Activated T-helper 1 cell treated with anti-CD3 and anti-CD28 coated beads, Interleukin-12 subunit alpha, Interleukin-12 subunit beta, Interleukin-2, Interleukin-4 antibody, amounts not matched to agents 30 ng/mL and 10 ng/mL and 1 ng/mL, durations not matched to agents 14 hours and 24 hours and 36 hours (primary cell): ENCODE measurements at regions of chr12 and their contacts with region 1.

Region 1: DNA sequence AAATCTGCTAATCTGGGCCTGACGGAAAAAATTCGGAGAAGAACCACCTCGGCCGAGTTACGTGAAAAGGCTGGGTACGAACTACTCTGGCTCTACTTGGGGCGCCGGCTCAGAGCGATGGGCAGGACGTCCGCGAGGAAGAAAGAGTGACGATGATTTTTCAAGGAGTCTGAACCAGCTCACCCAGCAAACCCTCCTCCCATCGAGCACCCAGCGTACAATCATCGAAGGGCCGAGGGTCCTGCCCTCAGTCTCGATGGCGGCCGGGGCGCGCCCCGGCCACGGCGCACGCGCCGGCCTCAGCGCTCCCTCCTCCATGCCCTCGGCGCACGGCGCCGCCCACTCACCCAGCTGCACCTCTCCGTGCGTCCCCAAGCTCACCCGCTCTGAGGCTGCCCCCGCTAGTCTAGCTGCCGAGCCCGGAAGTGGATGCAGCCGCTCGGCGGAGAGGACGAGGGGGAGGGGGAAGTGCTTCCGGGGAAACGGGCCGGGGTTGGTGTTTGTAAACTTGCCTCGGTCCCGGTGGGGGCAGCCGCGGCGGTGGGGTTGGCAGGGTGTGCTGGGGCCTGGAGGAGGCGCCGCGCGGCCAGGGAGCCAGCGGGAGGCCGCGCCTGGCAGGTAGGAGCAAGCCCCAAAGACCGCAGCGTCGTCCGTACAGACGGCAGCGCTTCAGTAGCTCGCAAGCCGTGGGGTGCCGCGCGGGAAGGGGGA is at the starts of genes CSAD and ZNF740:
- DNase-seq: peak; percentile 97
- H3K4me3 Mint-ChIP-seq: peak within 1 kb of the TSS; percentile 88
- H3K27ac Mint-ChIP-seq: peak within 1 kb of the TSS; percentile 99
- H3K4me1 Mint-ChIP-seq: peaks cover 52% of the 10 kb centered on the region
- H3K27me3 Mint-ChIP-seq: no peaks in the 10 kb centered on the region
- total RNA-seq, gene CSAD: 21.7 and 22.6 TPM in 2 replicates
- total RNA-seq, gene ZNF740: 48.1 and 52.8 TPM in 2 replicates

Region 2: GRCh38 chr12:52486166-52487105 is 693.9 kb before region 1 on chr12:
- intact Hi-C with region 1: no loop called
- DNase-seq: no peak
- H3K4me3 Mint-ChIP-seq: no peak overlapping the region
- H3K27ac Mint-ChIP-seq: no peak overlapping the region
- H3K4me1 Mint-ChIP-seq: no peaks in the 10 kb centered on the region
- H3K27me3 Mint-ChIP-seq: peaks cover 39% of the 10 kb centered on the region

Region 3: GRCh38 chr12:53079226-53080117 is 100.9 kb before region 1 on chr12 and contains the start of gene SPRYD3:
- intact Hi-C with region 1: loop called (anchors 1 kb)
- DNase-seq: peak; percentile 97
- H3K4me3 Mint-ChIP-seq: peak within 1 kb of the TSS; percentile 93
- H3K27ac Mint-ChIP-seq: peak within 1 kb of the TSS; percentile 92
- H3K4me1 Mint-ChIP-seq: peaks cover 36% of the 10 kb centered on the region
- H3K27me3 Mint-ChIP-seq: no peaks in the 10 kb centered on the region
- total RNA-seq, gene SPRYD3: 41.2 and 42.6 TPM in 2 replicates

Region 4: DNA sequence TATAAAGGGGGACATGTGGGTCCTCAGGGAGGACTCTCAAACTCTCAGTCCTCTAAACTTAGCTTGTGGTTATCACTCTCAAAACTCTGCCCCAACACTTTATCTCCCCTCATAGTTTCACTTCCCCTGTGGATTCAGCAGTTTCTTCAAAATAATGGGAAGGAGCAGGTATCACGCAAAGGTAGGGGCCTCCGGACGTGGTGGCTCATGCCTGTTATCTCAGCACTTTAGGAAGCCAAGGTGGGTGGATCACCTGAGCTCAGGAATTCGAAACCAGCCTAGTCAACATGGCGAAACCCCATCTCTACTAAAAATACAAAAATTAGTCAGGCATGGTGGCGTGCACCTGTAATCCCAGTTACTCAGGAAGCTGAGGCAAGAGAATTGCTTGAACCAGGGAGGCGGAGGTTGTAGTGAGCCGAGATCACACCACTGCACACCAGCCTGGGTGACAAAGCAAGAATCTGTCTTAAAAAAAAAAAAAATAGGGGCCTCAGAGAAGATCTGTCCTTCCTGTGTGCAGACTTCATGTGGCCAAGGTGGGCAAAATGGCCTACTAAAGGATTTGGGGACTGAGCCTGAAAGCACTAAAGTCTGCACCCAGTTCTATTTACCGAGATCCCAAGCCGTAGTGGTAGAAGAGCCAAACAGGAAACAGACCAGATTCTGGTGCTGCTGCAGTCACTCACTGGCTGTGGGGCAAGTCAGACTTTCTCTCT is 20.2 kb after region 1 on chr12:
- intact Hi-C with region 1: loop called (anchors 1 kb)
- DNase-seq: peak; percentile 16
- H3K4me3 Mint-ChIP-seq: peak overlapping the region; percentile 83
- H3K27ac Mint-ChIP-seq: peak overlapping the region; percentile 95
- H3K4me1 Mint-ChIP-seq: peaks cover 67% of the 10 kb centered on the region
- H3K27me3 Mint-ChIP-seq: no peaks in the 10 kb centered on the region

Region 5: DNA sequence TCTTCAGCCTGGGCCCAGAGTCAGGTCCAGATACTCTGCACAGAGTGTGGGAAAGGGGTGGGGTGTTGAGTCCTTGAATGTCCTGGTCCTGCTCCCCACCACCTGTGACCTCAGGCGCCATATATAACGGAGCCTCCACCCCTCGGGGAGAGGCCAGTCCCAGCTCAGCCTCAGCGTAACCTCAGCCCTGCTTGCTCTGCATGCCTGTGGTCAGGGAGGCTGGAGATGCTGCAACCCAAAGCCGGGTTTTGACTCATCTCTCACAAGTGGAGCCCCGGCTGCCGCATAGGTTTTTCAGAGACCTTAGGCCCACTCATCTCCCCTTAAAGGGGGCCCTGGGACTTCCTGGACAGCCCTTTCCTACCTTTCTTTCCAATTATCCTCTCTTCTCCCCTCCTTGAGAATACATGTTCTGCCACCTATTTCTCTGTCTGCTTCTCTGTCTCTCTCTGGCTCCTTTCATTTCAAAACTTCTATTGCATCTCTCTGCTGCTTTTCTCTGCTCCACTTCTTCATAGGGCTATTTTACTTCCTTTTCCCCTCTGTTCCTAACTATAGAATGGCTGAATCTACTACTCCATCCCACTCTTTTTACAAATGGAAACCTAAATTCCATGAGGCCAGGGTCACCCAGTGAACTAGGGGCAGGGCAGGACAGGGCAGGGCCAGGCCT is 25.5 kb after region 1 on chr12:
- intact Hi-C with region 1: loop called (anchors 1 kb)
- DNase-seq: peak; percentile 74
- H3K4me3 Mint-ChIP-seq: peak overlapping the region; percentile 82
- H3K27ac Mint-ChIP-seq: peak overlapping the region; percentile 90
- H3K4me1 Mint-ChIP-seq: peaks cover 67% of the 10 kb centered on the region
- H3K27me3 Mint-ChIP-seq: no peaks in the 10 kb centered on the region

Region 6: DNA sequence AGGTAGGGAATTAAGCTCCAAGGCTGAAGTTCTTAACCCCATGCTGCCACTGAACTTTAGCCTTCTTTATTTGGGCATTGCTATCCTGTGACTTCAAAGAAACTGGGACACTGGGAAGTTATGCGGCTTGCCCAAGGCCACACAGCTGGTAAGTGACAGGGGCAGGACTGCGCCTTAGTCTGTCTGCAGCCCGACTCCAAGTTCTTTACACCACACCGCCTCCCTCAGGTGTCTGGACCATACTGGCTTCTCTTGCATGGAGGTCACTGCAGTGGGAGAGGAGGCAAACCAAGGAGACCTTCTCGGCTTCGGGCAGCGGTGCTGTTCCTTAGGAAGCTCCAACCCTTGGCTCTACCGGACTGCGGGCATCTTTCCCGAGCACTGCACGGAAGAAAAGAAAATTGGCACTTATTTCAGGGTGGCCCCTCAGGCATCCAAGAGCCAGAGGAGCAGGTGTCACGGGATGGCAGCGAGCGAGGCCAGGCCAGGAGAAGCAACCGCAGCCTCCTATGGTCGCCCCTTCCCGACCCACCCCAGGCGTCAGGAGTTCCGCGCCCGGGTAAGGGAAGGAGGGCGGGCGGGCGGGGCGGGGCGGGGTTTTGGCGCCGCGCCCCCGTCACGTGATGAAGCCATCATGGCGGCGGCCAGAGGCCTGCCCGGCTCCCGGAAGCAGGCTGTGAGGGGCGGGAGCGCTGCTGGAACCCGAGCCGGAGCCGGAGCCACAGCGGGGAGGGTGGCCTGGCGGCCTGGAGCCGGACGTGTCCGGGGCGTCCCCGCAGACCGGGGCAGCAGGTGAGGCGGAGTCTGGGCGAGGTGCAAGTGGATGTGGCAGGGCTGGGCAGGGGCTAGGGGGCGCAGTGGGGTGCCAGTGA is 71.3 kb after region 1 on chr12:
- intact Hi-C with region 1: loop called (anchors 1 kb)
- DNase-seq: peak; percentile 69
- H3K4me3 Mint-ChIP-seq: peak overlapping the region; percentile 99
- H3K27ac Mint-ChIP-seq: peak overlapping the region; percentile 88
- H3K4me1 Mint-ChIP-seq: peaks cover 50% of the 10 kb centered on the region
- H3K27me3 Mint-ChIP-seq: peaks cover 2% of the 10 kb centered on the region

Region 7: DNA sequence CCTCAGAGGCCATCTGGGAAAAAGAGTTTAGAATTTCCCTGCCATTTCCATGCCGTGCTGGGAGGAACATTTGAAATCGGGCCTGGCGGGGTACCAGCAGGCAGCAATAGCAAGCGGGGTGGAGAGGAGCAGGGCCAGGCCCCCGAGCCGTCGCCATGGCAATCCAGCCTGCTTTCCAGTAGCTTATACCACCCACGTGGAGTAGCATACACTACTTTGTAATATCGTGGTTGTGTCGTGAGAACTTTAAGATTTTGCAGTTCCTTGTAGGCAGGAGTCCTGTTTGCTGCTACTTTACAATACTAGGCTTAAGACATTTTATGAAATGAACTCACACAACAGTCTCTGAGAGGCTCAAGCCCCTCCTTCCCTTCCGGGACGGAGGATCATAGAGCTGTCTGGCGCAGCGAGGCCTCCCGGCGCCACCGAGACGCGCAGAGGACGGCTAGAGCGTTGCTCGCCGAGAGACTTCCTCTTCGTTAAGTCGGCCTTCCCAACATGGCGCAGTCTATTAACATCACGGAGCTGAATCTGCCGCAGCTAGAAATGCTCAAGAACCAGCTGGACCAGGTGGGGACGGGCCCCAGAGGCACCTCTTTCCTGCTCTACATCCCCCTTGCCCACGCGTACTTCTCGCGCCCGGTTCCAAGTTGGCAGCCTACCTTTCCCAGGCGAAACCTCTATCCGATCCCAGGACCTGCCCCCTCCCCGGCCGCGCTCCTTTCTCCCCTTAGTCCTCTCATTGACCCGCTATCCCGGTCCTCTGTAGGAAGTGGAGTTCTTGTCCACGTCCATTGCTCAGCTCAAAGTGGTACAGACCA is 114.9 kb after region 1 on chr12 and contains the start of gene PFDN5:
- intact Hi-C with region 1: loop called (anchors 1 kb)
- DNase-seq: peak; percentile 86
- H3K4me3 Mint-ChIP-seq: peak within 1 kb of the TSS; percentile 99
- H3K27ac Mint-ChIP-seq: peak within 1 kb of the TSS; percentile 91
- H3K4me1 Mint-ChIP-seq: peaks cover 50% of the 10 kb centered on the region
- H3K27me3 Mint-ChIP-seq: no peaks in the 10 kb centered on the region
- total RNA-seq, gene PFDN5: 344 and 350 TPM in 2 replicates

Region 8: GRCh38 chr12:53500776-53501614 is 320.6 kb after region 1 on chr12 and contains the start of gene TARBP2:
- intact Hi-C with region 1: loop called (anchors 1 kb)
- DNase-seq: peak; percentile 93
- H3K4me3 Mint-ChIP-seq: peak within 1 kb of the TSS; percentile 95
- H3K27ac Mint-ChIP-seq: peak within 1 kb of the TSS; percentile 98
- H3K4me1 Mint-ChIP-seq: peaks cover 53% of the 10 kb centered on the region
- H3K27me3 Mint-ChIP-seq: peaks cover 2% of the 10 kb centered on the region
- total RNA-seq, gene TARBP2: 47.7 and 48.2 TPM in 2 replicates